Sigmoid colon (tissue), 7 donors: ENCODE measurements at regions of chr2 and their contacts with region 1.

Region 1: GRCh38 chr2:65129826-65130663 is at the start of gene RAB1A:
- DNase-seq: peak; percentile 100
- H3K4me3 ChIP-seq: peak within 1 kb of the TSS; percentile 59 to 94 (median 89)
- H3K27ac ChIP-seq: peak within 1 kb of the TSS; percentile 95 to 99 (median 98)
- H3K4me1 ChIP-seq: peaks cover 0 to 47% (median 40%) of the 10 kb centered on the region in 4 donors
- H3K27me3 ChIP-seq: no peaks in the 10 kb centered on the region
- CTCF ChIP-seq: peak in 2 of 4 experiments; percentile 34 to 35
- EP300 ChIP-seq: peak in 1 of 4 donors; percentile 38
- POLR2A ChIP-seq: peak; percentile 86 to 88
- total RNA-seq, gene RAB1A: 61.9 to 88.1 (median 83.9) TPM

Region 2: GRCh38 chr2:64988420-64989125 is 141.5 kb before region 1 on chr2:
- intact Hi-C with region 1: loop called (anchors 1 kb)
- DNase-seq: peak; percentile 88
- H3K4me3 ChIP-seq: peak overlapping the region; percentile 52 to 92 (median 82)
- H3K27ac ChIP-seq: peak overlapping the region; percentile 92 to 100 (median 98)
- H3K4me1 ChIP-seq: peaks cover 0 to 32% (median 25%) of the 10 kb centered on the region in 4 donors
- H3K27me3 ChIP-seq: no peaks in the 10 kb centered on the region
- CTCF ChIP-seq: peak; percentile 36 to 68 (median 56)
- EP300 ChIP-seq: no peak
- POLR2A ChIP-seq: peak; percentile 36 to 51

Region 3: DNA sequence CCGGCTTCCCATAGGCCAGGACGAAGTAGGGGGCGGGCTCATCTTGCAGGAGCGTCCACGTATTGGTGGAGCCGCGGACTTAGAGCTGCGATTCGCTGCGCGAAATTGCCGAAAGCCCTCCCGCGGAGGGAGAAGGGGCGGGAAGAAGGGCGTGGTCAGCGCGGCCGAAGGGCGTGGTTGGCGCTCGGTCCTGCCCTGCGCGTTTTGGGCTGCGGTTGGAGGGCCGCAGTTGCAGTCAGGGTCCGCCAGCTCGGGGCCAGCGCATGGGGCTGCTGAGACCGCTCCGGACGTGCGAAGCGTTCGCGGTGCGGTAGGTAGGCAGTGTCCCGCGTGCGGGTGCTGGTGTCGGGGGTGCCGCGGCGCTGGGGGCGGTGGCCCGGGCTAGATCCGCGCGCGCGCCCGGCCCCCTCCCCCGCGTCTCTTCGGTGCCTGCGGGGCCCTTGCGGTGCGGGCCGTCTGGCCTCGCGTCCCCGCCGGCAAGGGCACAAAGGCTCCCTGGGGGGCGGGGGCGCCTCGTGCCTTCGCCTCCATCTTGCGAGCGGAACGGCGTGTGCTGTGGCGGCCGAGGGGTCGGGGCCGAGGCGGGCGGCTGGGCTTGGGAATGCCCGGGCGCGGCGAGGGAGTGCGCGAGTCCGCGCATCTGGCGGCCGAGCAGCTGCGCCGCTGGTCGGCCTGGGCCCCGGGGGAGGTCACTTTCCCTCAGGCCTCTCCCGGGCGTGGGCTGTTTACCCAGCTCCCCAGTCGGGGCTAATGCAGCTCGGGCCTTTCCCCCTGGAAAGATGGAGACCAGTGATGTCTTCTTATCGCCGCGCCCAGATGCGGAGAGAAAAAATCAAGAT is 73.6 kb before region 1 on chr2 and contains the start of gene CEP68:
- intact Hi-C with region 1: loop called (anchors 5 kb)
- DNase-seq: peak; percentile 99
- H3K4me3 ChIP-seq: peak within 1 kb of the TSS; percentile 57 to 95 (median 88)
- H3K27ac ChIP-seq: peak within 1 kb of the TSS; percentile 93 to 96 (median 94)
- H3K4me1 ChIP-seq: peaks cover 0 to 52% (median 47%) of the 10 kb centered on the region in 4 donors
- H3K27me3 ChIP-seq: no peaks in the 10 kb centered on the region
- CTCF ChIP-seq: no peak
- EP300 ChIP-seq: no peak
- POLR2A ChIP-seq: peak; percentile 30 to 76
- total RNA-seq, gene CEP68: 24.4 to 32.1 (median 28.6) TPM

Region 4: GRCh38 chr2:65064728-65065552 is 65.1 kb before region 1 on chr2:
- intact Hi-C with region 1: loop called (anchors 2 kb)
- DNase-seq: peak; percentile 83
- H3K4me3 ChIP-seq: no peak overlapping the region
- H3K27ac ChIP-seq: peak overlapping the region; percentile 56 to 76 (median 63)
- H3K4me1 ChIP-seq: peaks cover 0 to 91% (median 78%) of the 10 kb centered on the region in 4 donors
- H3K27me3 ChIP-seq: no peaks in the 10 kb centered on the region
- CTCF ChIP-seq: peak; percentile 62 to 86 (median 78)
- EP300 ChIP-seq: peak in 1 of 4 donors; percentile 68
- POLR2A ChIP-seq: no peak

Region 5: GRCh38 chr2:65085148-65085547 is 44.9 kb before region 1 on chr2:
- intact Hi-C with region 1: loop called (anchors 5 kb)
- DNase-seq: no peak
- H3K4me3 ChIP-seq: no peak overlapping the region
- H3K27ac ChIP-seq: no peak overlapping the region
- H3K4me1 ChIP-seq: peaks cover 0 to 8% (median 0%) of the 10 kb centered on the region in 4 donors
- H3K27me3 ChIP-seq: no peaks in the 10 kb centered on the region
- CTCF ChIP-seq: no peak
- EP300 ChIP-seq: no peak
- POLR2A ChIP-seq: no peak

Region 6: DNA sequence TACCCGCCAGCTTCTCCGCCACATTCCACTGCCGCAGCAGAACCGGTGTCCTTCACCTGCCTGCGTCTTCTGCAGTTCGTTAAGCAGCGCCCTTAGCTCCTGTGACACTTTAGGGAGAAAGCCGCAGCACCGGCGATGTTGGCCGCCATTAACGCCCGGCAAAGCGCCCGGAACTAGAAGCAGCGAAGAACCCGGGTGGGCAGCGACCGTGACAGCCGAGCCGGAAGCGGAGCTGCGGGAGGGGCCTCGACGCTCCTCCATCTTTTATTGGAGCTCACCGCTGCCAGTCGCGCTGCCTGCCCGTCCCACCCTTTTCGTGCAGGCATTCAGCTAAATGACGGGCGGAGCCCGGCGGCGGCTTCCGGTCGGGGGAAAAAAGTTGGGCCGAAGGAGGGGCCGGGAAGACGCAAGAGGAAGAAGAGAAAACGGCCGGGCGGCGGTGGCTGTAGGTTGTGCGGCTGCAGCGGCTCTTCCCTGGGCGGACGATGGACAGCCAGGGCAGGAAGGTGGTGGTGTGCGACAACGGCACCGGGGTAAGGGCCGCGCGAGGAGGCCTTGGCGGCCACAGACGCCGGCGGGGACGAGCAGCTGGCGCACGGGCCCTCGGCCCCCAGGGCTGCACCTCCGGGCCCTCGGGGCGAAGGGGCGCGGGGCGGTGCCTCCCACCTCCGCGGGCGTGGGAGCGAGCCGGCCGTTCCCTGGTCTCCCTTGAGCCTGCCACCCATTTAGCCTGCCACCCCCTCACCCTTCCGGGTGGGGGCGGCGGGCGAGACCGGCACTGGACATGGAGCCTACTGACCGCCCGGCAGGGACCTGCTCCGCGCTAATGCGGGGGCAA is 97.6 kb after region 1 on chr2 and contains the start of gene ACTR2:
- intact Hi-C with region 1: loop called (anchors 5 kb)
- DNase-seq: peak; percentile 98
- H3K4me3 ChIP-seq: peak within 1 kb of the TSS; percentile 92 to 96 (median 93)
- H3K27ac ChIP-seq: peak within 1 kb of the TSS; percentile 95 to 99 (median 97)
- H3K4me1 ChIP-seq: peaks cover 0 to 55% (median 44%) of the 10 kb centered on the region in 4 donors
- H3K27me3 ChIP-seq: no peaks in the 10 kb centered on the region
- CTCF ChIP-seq: no peak
- EP300 ChIP-seq: no peak
- POLR2A ChIP-seq: peak; percentile 66 to 82
- total RNA-seq, gene ACTR2: 70.9 to 98.1 (median 88.1) TPM

Region 7: DNA sequence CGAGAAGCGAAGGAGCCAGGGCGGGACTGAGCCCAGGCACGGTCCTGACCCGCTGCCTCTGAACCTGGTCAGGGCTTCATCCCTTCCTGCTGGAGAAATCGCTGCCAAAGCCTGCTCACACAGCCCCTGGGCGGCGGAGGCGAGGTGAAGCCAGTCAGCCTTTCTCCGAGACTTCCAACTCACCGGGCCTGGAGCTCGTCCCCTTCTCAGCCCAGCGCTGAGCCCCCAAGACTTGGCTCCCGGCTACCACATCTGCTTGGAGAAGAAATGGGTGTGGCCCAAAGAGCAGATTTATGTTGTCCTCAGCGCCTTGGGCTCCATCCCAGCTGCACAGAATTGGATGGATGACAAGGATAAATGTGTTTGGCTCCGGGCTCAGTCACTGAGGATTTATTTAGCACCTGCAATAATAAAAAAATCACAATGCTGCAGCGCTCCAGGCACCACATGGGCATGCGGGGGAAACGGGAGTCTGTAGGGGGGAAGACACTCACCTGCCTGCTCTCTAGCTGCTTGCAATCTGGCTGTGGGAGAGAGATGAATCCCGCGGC is 162.5 kb after region 1 on chr2:
- intact Hi-C with region 1: no loop called
- DNase-seq: no peak
- H3K4me3 ChIP-seq: no peak overlapping the region
- H3K27ac ChIP-seq: no peak overlapping the region
- H3K4me1 ChIP-seq: peaks cover 0 to 13% (median 10%) of the 10 kb centered on the region in 4 donors
- H3K27me3 ChIP-seq: no peaks in the 10 kb centered on the region
- CTCF ChIP-seq: no peak
- EP300 ChIP-seq: no peak
- POLR2A ChIP-seq: no peak

Region 8: GRCh38 chr2:65432227-65433190 is 302.5 kb after region 1 on chr2 and contains the start of gene SPRED2:
- intact Hi-C with region 1: loop called (anchors 5 kb)
- DNase-seq: peak; percentile 98
- H3K4me3 ChIP-seq: peak within 1 kb of the TSS; percentile 69 to 91 (median 76)
- H3K27ac ChIP-seq: peak within 1 kb of the TSS; percentile 88 to 92 (median 89)
- H3K4me1 ChIP-seq: peaks cover 7 to 28% (median 17%) of the 10 kb centered on the region in 4 donors
- H3K27me3 ChIP-seq: no peaks in the 10 kb centered on the region
- CTCF ChIP-seq: no peak
- EP300 ChIP-seq: no peak
- POLR2A ChIP-seq: peak in 1 of 2 donors; percentile 44
- total RNA-seq, gene SPRED2: 6.1 to 13.7 (median 11.5) TPM